Endothelial cell of umbilical vein (primary cell): ENCODE measurements at regions of chr11 and their contacts with region 1.

Region 1: DNA sequence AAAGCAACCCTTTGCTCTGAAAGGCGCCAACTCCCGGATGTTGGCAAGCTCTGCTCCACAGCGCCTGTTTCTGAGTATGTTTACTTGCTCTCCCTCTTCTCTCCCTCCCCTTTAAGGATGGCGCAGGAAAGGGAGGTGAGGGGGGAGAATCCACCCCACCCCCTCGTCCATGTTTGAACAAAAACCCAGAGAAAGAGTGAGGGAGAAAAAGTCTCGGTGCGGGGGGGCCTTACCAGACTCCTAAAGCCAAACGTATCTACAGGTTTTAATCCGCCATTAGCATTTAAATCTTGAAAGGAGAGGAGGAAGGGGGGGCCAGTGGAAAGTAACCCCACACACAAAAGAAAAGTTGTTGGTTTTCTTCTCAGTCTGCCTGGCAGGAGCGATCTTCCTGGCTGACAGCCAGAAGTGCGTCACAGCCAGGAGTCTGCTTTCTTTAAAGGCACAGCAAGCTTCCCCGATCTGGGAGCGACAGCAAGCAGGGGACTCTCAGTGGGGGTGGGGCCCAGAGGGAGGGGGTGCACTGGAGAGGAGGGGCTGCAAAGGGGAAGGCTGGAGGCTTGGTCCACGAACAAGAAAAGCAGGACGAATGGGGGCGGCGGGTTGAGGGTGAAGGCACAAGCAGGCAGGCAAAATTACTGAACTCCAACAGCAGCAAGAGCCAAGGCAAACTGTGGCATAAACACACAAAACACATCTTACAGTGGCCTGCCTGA is 39.5 kb downstream of the NUMA1 start:
- DNase-seq: peak; percentile 96
- H3K4me3 ChIP-seq: peak overlapping the region; percentile 28 to 66 (median 58)
- H3K27ac ChIP-seq: peak overlapping the region; percentile 90
- H3K4me1 ChIP-seq: peaks cover 38% of the 10 kb centered on the region
- H3K27me3 ChIP-seq: no peaks in the 10 kb centered on the region
- CTCF ChIP-seq: no peak
- POLR2A ChIP-seq: no peak

Region 2: GRCh38 chr11:71940561-71941219 is 100.2 kb before region 1 on chr11:
- CTCF ChIA-PET with region 1: no interaction called
- POLR2A ChIA-PET with region 1: no interaction called
- dilution Hi-C with region 1: no loop called
- intact Hi-C with region 1: no loop called
- DNase-seq: no peak
- H3K4me3 ChIP-seq: no peak overlapping the region
- H3K27ac ChIP-seq: no peak overlapping the region
- H3K4me1 ChIP-seq: peaks cover 67% of the 10 kb centered on the region
- H3K27me3 ChIP-seq: no peaks in the 10 kb centered on the region
- CTCF ChIP-seq: no peak
- POLR2A ChIP-seq: no peak

Region 3: GRCh38 chr11:72069787-72070251 is 28.9 kb after region 1 on chr11:
- CTCF ChIA-PET with region 1: interaction called, 6 read pairs
- POLR2A ChIA-PET with region 1: interaction called, 7 read pairs
- dilution Hi-C with region 1: no loop called
- intact Hi-C with region 1: loop called (anchors 1 kb)
- DNase-seq: peak; percentile 81
- H3K4me3 ChIP-seq: peak overlapping the region in 1 of 3 experiments; percentile 1
- H3K27ac ChIP-seq: peak overlapping the region; percentile 50
- H3K4me1 ChIP-seq: peaks cover 64% of the 10 kb centered on the region
- H3K27me3 ChIP-seq: no peaks in the 10 kb centered on the region
- CTCF ChIP-seq: no peak
- POLR2A ChIP-seq: peak; percentile 64

Region 4: GRCh38 chr11:72080256-72080974 is 39.5 kb after region 1 on chr11 and contains the starts of genes LRRC51 and NUMA1:
- CTCF ChIA-PET with region 1: interaction called, 7 read pairs
- POLR2A ChIA-PET with region 1: interaction called, 3 read pairs
- dilution Hi-C with region 1: no loop called
- intact Hi-C with region 1: loop called (anchors 1 kb)
- DNase-seq: peak; percentile 100
- H3K4me3 ChIP-seq: peak within 1 kb of the TSS; percentile 64 to 82 (median 78)
- H3K27ac ChIP-seq: peak within 1 kb of the TSS; percentile 94
- H3K4me1 ChIP-seq: peaks cover 28% of the 10 kb centered on the region
- H3K27me3 ChIP-seq: no peaks in the 10 kb centered on the region
- CTCF ChIP-seq: no peak
- POLR2A ChIP-seq: no peak
- total RNA-seq, gene LRRC51: 3.8 and 6.1 TPM in 2 replicates
- total RNA-seq, gene NUMA1: 164 and 168 TPM in 2 replicates

Region 5: GRCh38 chr11:72091005-72091691 is 50.3 kb after region 1 on chr11:
- CTCF ChIA-PET with region 1: interaction called, 48 read pairs
- POLR2A ChIA-PET with region 1: no interaction called
- dilution Hi-C with region 1: no loop called
- intact Hi-C with region 1: no loop called
- DNase-seq: peak; percentile 73
- H3K4me3 ChIP-seq: no peak overlapping the region
- H3K27ac ChIP-seq: no peak overlapping the region
- H3K4me1 ChIP-seq: peaks cover 3% of the 10 kb centered on the region
- H3K27me3 ChIP-seq: no peaks in the 10 kb centered on the region
- CTCF ChIP-seq: peak; percentile 84 to 87
- POLR2A ChIP-seq: no peak

Region 6: GRCh38 chr11:72102946-72103753 is 62.3 kb after region 1 on chr11 and contains the start of gene LAMTOR1:
- CTCF ChIA-PET with region 1: interaction called, 3 read pairs
- POLR2A ChIA-PET with region 1: no interaction called
- dilution Hi-C with region 1: no loop called
- intact Hi-C with region 1: loop called (anchors 2 kb)
- DNase-seq: peak; percentile 99
- H3K4me3 ChIP-seq: peak within 1 kb of the TSS; percentile 74 to 97 (median 86)
- H3K27ac ChIP-seq: peak within 1 kb of the TSS; percentile 88
- H3K4me1 ChIP-seq: peaks cover 26% of the 10 kb centered on the region
- H3K27me3 ChIP-seq: no peaks in the 10 kb centered on the region
- CTCF ChIP-seq: peak; percentile 34 to 38
- POLR2A ChIP-seq: peak; percentile 92
- total RNA-seq, gene LAMTOR1: 91.1 and 95.1 TPM in 2 replicates

Region 7: GRCh38 chr11:72112321-72113219 is 71.7 kb after region 1 on chr11 and contains the start of gene ANAPC15:
- CTCF ChIA-PET with region 1: no interaction called
- POLR2A ChIA-PET with region 1: no interaction called
- dilution Hi-C with region 1: no loop called
- intact Hi-C with region 1: loop called (anchors 1 kb)
- DNase-seq: peak; percentile 100
- H3K4me3 ChIP-seq: peak within 1 kb of the TSS; percentile 14 to 69 (median 53)
- H3K27ac ChIP-seq: peak within 1 kb of the TSS; percentile 90
- H3K4me1 ChIP-seq: peaks cover 14% of the 10 kb centered on the region
- H3K27me3 ChIP-seq: peaks cover 0 to 3% of the 10 kb centered on the region in 2 experiments
- CTCF ChIP-seq: no peak
- POLR2A ChIP-seq: peak; percentile 99
- total RNA-seq, gene ANAPC15: 67.0 and 72.4 TPM in 2 replicates

Region 8: DNA sequence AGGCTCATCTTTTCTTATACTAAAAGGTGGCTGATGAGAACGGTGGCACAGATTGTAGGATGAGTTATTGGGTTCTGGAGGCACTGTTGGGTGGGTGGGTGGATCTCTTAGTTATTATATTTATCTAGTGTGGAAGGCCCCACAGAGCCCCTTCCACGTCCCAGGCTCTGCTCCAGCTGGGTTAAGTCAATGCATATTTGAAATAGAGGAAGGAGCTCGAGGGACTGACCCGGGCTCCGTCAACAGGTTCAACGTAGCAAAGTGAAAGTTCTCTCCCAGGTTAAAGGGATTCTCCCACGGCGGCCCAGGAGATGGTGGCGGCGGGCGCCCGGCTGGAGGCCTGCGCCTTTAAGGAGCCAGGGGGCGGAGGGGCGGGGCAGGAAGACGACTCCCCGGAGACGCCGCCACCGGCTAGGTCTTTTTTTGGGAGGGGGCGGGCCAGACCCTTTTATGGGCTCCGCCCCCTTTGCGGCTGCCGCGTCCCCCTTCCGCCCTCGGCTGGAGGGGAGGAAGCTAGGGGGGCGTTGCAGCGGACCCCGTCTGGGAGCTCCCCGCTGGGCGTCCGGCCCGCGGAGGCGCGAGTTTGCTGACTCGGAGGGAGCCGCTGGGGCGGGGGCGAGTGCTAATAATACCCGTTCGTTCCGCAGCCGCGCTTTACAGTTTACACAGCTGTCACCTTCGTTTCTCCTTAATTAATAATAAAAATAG is 182.2 kb after region 1 on chr11:
- CTCF ChIA-PET with region 1: no interaction called
- POLR2A ChIA-PET with region 1: no interaction called
- dilution Hi-C with region 1: no loop called
- intact Hi-C with region 1: loop called (anchors 1 kb)
- DNase-seq: peak; percentile 93
- H3K4me3 ChIP-seq: peak overlapping the region; percentile 62 to 94 (median 70)
- H3K27ac ChIP-seq: peak overlapping the region; percentile 60
- H3K4me1 ChIP-seq: peaks cover 9% of the 10 kb centered on the region
- H3K27me3 ChIP-seq: peaks cover 4 to 7% of the 10 kb centered on the region in 2 experiments
- CTCF ChIP-seq: peak in 1 of 2 donors; percentile 16
- POLR2A ChIP-seq: no peak